Natural killer cell (primary cell): ENCODE measurements at regions of chrX and their contacts with region 1.

Region 1: DNA sequence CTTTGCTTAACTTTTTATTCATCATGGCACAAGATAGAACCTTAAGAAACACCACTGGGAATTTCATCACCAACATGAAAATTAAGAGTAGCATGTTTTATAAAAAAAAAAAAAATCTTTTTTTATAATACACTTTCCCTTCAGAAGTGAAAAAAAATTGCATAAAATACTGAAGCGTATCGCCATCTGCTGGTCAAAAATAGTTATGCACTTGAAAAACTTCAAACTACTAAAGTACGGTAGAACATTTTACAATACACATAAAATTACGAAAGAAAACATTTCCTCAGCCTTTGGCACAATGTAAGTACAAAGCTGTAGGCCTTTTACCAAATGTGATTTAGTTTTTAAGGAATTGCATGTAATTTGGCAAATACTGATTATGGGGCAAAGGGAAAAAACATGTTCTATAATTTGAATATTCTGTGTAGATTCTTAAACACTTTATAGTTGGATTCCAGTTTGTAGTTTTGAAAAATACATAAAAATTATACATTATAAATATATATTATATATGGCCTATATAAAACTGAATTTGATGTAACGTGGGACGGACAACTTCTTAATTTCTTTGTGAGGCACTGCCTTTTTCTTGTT is 26.5 kb downstream of the HCCS start:
- DNase-seq: peak in 1 of 2 donors; percentile 67
- ATAC-seq: no peak
- H3K4me3 ChIP-seq: no peak overlapping the region
- H3K4me3 Mint-ChIP-seq: no peak overlapping the region
- H3K27ac ChIP-seq: no peak overlapping the region
- H3K27ac Mint-ChIP-seq: no peak overlapping the region
- H3K4me1 ChIP-seq: no peaks in the 10 kb centered on the region
- H3K4me1 Mint-ChIP-seq: no peaks in the 10 kb centered on the region
- H3K27me3 ChIP-seq: no peaks in the 10 kb centered on the region
- H3K27me3 Mint-ChIP-seq: peaks cover 0 to 9% of the 10 kb centered on the region in 2 donors
- CTCF ChIP-seq: peak; percentile 70

Region 2: GRCh38 chrX:10722851-10723250 is 414.8 kb before region 1 on chrX:
- intact Hi-C with region 1: loop called (anchors 10 kb)
- DNase-seq: peak in 1 of 2 donors; percentile 46
- ATAC-seq: peak in 1 of 3 donors; percentile 58
- H3K4me3 ChIP-seq: no peak overlapping the region
- H3K4me3 Mint-ChIP-seq: no peak overlapping the region
- H3K27ac ChIP-seq: no peak overlapping the region
- H3K27ac Mint-ChIP-seq: no peak overlapping the region
- H3K4me1 ChIP-seq: no peaks in the 10 kb centered on the region
- H3K4me1 Mint-ChIP-seq: no peaks in the 10 kb centered on the region
- H3K27me3 ChIP-seq: no peaks in the 10 kb centered on the region
- H3K27me3 Mint-ChIP-seq: peaks cover 0 to 11% of the 10 kb centered on the region in 2 donors
- CTCF ChIP-seq: peak; percentile 18

Region 3: GRCh38 chrX:12153741-12154140 is 1016.1 kb after region 1 on chrX:
- intact Hi-C with region 1: no loop called
- DNase-seq: no peak
- ATAC-seq: no peak
- H3K4me3 ChIP-seq: no peak overlapping the region
- H3K4me3 Mint-ChIP-seq: no peak overlapping the region
- H3K27ac ChIP-seq: no peak overlapping the region
- H3K27ac Mint-ChIP-seq: no peak overlapping the region
- H3K4me1 ChIP-seq: no peaks in the 10 kb centered on the region
- H3K4me1 Mint-ChIP-seq: no peaks in the 10 kb centered on the region
- H3K27me3 ChIP-seq: no peaks in the 10 kb centered on the region
- H3K27me3 Mint-ChIP-seq: no peaks in the 10 kb centered on the region
- CTCF ChIP-seq: no peak